Mammary epithelial cell (primary cell): ENCODE measurements at regions of chr6 and their contacts with region 1.

Region 1: GRCh38 chr6:120056085-120056484 is 706.5 kb upstream of the MAN1A1 start:
- DNase-seq: no peak
- H3K4me3 ChIP-seq: no peak overlapping the region
- H3K27ac ChIP-seq: no peak overlapping the region
- H3K4me1 ChIP-seq: no peaks in the 10 kb centered on the region
- H3K27me3 ChIP-seq: no peaks in the 10 kb centered on the region
- CTCF ChIP-seq: peak; percentile 52 to 58

Region 2: GRCh38 chr6:120005292-120005976 is 50.7 kb before region 1 on chr6:
- CTCF ChIA-PET with region 1: no interaction called
- dilution Hi-C with region 1: no loop called
- in situ Hi-C with region 1: no loop called
- intact Hi-C with region 1: no loop called
- DNase-seq: no peak
- H3K4me3 ChIP-seq: no peak overlapping the region
- H3K27ac ChIP-seq: no peak overlapping the region
- H3K4me1 ChIP-seq: no peaks in the 10 kb centered on the region
- H3K27me3 ChIP-seq: no peaks in the 10 kb centered on the region
- CTCF ChIP-seq: no peak

Region 3: GRCh38 chr6:120096696-120097260 is 40.7 kb after region 1 on chr6:
- CTCF ChIA-PET with region 1: no interaction called
- dilution Hi-C with region 1: no loop called
- in situ Hi-C with region 1: no loop called
- intact Hi-C with region 1: no loop called
- DNase-seq: no peak
- H3K4me3 ChIP-seq: no peak overlapping the region
- H3K27ac ChIP-seq: no peak overlapping the region
- H3K4me1 ChIP-seq: no peaks in the 10 kb centered on the region
- H3K27me3 ChIP-seq: no peaks in the 10 kb centered on the region
- CTCF ChIP-seq: no peak

Region 4: GRCh38 chr6:120129228-120129627 is 73.1 kb after region 1 on chr6:
- CTCF ChIA-PET with region 1: no interaction called
- dilution Hi-C with region 1: loop called (anchors 5 kb)
- in situ Hi-C with region 1: no loop called
- intact Hi-C with region 1: no loop called
- DNase-seq: no peak
- H3K4me3 ChIP-seq: no peak overlapping the region
- H3K27ac ChIP-seq: no peak overlapping the region
- H3K4me1 ChIP-seq: no peaks in the 10 kb centered on the region
- H3K27me3 ChIP-seq: no peaks in the 10 kb centered on the region
- CTCF ChIP-seq: no peak